Posterior vena cava (tissue), 2 donors: ENCODE measurements at regions of chr9 and their contacts with region 1.

Region 1: GRCh38 chr9:121992571-121993212 is 100.4 kb downstream of the TTLL11 start:
- DNase-seq: peak; percentile 83

Region 2: GRCh38 chr9:121686930-121687541 is 305.7 kb before region 1 on chr9:
- intact Hi-C with region 1: loop called (anchors 5 to 10 kb)
- DNase-seq: peak; percentile 89